Gastrocnemius medialis (tissue), 4 donors: ENCODE measurements at regions of chr18 and their contacts with region 1.

Region 1: GRCh38 chr18:9334329-9334972 is at the start of gene TWSG1:
- DNase-seq: peak; percentile 85 to 87
- ATAC-seq: peak; percentile 83 to 87
- H3K4me3 ChIP-seq: peak within 1 kb of the TSS; percentile 62 to 91 (median 72)
- H3K27ac ChIP-seq: peak within 1 kb of the TSS; percentile 66 to 88 (median 78)
- H3K4me1 ChIP-seq: peaks cover 0 to 8% of the 10 kb centered on the region in 2 donors
- H3K27me3 ChIP-seq: no peaks in the 10 kb centered on the region
- CTCF ChIP-seq: peak in 4 of 5 experiments; percentile 32 to 65 (median 44)
- POLR2A ChIP-seq: peak; percentile 54 to 75
- total RNA-seq, gene TWSG1: 5.3 to 9.5 (median 8.1) TPM

Region 2: DNA sequence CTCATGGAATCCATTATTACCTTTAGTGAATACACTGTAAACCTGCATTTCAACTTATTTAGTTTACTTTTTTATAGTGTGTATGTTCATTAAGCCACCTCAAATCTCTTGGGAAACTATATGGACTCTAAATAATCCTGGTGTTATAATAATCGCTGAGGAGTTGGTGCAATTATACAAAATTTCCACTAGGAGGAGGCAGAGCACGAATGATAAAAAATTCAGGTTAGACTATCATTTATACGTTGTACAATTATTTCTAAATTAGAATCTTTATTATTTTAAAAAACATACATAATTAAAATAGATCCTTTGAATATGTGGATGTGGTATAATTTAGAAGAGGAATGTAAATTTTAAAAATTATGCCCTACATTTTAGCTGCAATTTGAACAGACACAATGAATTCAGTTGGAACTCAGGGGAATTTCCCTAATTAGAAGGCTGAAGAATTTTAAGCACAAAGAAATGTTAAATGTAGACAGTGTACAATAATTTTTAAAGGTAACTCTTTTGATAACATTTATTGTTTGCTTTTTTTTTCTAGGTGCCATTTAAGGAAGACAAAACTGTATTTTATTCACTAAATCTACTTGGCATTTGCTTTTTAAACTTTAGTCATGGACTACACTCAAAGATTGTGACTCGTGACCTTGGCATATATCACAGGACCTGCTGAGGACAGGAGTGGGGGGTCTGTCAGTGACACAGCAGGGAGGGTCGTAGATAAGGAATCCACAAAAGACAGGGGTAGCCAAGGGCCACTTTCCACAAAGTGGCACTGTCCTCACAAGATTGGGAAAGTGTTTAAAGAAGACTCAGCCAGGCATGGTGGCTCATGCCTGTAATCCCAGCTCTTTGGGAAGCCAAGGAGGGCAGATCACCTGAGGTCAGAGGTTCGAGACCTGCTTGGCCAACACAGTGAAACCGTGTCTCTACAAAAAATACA is 679.7 kb before region 1 on chr18:
- in situ Hi-C with region 1: loop called in 1 of 4 experiments (anchors 25 kb)
- intact Hi-C with region 1: no loop called
- DNase-seq: no peak
- ATAC-seq: peak; percentile 62
- H3K4me3 ChIP-seq: no peak overlapping the region
- H3K27ac ChIP-seq: no peak overlapping the region
- H3K4me1 ChIP-seq: no peaks in the 10 kb centered on the region
- H3K27me3 ChIP-seq: no peaks in the 10 kb centered on the region
- CTCF ChIP-seq: peak; percentile 55 to 84 (median 78)
- POLR2A ChIP-seq: no peak

Region 3: GRCh38 chr18:9102508-9103375 is 231.7 kb before region 1 on chr18 and contains the start of gene NDUFV2:
- in situ Hi-C with region 1: no loop called
- intact Hi-C with region 1: loop called (anchors 2 kb)
- DNase-seq: peak; percentile 95 to 96
- ATAC-seq: peak; percentile 89 to 93
- H3K4me3 ChIP-seq: peak within 1 kb of the TSS; percentile 73 to 89 (median 82)
- H3K27ac ChIP-seq: peak within 1 kb of the TSS; percentile 93 to 98 (median 96)
- H3K4me1 ChIP-seq: peaks cover 42 to 47% of the 10 kb centered on the region in 2 donors
- H3K27me3 ChIP-seq: no peaks in the 10 kb centered on the region
- CTCF ChIP-seq: no peak
- POLR2A ChIP-seq: peak; percentile 92
- total RNA-seq, gene NDUFV2: 251 to 386 (median 277) TPM

Region 4: DNA sequence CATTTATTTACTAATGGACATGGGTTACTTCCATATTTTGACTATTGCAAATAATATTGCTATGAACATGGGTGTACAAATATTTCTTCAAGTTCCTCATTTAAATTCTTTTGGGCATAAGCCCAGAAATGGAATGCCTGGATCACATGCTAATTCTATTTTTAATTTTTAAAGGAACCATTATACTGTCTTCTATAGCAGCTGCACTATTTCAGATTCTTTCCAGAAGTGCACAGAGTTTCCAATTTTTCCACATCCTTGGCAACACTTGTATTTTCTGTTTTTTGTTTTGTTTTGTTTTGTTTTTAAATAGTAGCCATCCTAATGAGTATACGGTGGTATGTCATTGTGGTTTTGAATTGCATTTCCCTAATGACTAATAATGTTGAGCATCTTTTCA is 132.4 kb after region 1 on chr18:
- in situ Hi-C with region 1: loop called in 1 of 4 experiments (anchors 10 kb)
- intact Hi-C with region 1: no loop called
- DNase-seq: no peak
- ATAC-seq: no peak
- H3K4me3 ChIP-seq: no peak overlapping the region
- H3K27ac ChIP-seq: no peak overlapping the region
- H3K4me1 ChIP-seq: no peaks in the 10 kb centered on the region
- H3K27me3 ChIP-seq: no peaks in the 10 kb centered on the region
- CTCF ChIP-seq: no peak
- POLR2A ChIP-seq: no peak

Region 5: DNA sequence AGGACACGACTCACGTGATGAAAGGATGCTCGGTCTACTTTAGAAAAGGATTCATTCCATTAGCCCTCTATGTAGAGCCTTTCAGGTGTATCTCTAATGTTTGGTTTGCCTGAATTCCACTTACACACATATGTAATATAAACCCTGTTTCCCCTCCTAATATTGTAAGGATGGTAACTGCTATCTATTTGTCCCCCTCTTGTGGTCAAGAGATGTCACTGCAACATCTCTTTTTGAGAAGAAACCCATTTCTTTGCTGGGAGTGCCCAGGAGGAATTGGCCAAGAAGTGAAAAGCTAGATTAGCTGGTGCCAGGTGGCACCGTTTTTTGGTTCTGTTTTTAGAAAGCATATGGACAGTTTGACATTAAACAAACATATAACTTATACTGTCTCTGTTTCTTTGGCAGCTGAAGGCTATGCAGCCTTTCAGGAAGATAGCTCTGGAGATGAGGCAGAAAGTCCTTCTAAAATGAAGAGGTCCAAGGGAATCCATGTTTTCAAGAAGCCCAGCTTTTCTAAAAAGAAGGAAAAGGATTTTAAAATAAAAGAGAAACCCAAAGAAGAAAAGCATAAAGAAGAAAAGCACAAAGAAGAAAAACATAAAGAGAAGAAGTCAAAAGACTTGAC is 182.1 kb after region 1 on chr18:
- in situ Hi-C with region 1: no loop called
- intact Hi-C with region 1: loop called (anchors 10 kb)
- DNase-seq: no peak
- ATAC-seq: no peak
- H3K4me3 ChIP-seq: no peak overlapping the region
- H3K27ac ChIP-seq: no peak overlapping the region
- H3K4me1 ChIP-seq: peaks cover 0 to 5% of the 10 kb centered on the region in 2 donors
- H3K27me3 ChIP-seq: no peaks in the 10 kb centered on the region
- CTCF ChIP-seq: peak; percentile 53 to 86 (median 75)
- POLR2A ChIP-seq: no peak

Region 6: GRCh38 chr18:9708057-9708433 is 373.6 kb after region 1 on chr18 and contains the start of gene RAB31:
- in situ Hi-C with region 1: no loop called
- intact Hi-C with region 1: loop called (anchors 10 kb)
- DNase-seq: peak in 1 of 2 donors; percentile 54
- ATAC-seq: peak; percentile 69 to 72
- H3K4me3 ChIP-seq: peak within 1 kb of the TSS; percentile 64 to 85 (median 71)
- H3K27ac ChIP-seq: peak within 1 kb of the TSS; percentile 63 to 85 (median 72)
- H3K4me1 ChIP-seq: peaks cover 8 to 9% of the 10 kb centered on the region in 2 donors
- H3K27me3 ChIP-seq: peaks cover 18 to 21% (median 18%) of the 10 kb centered on the region in 3 donors
- CTCF ChIP-seq: no peak
- POLR2A ChIP-seq: peak; percentile 44 to 58
- total RNA-seq, gene RAB31: 3.2 to 7.1 (median 4.4) TPM